CD8-positive, alpha-beta memory T cell (primary cell): ENCODE measurements at regions of chr14 and their contacts with region 1.

Region 1: DNA sequence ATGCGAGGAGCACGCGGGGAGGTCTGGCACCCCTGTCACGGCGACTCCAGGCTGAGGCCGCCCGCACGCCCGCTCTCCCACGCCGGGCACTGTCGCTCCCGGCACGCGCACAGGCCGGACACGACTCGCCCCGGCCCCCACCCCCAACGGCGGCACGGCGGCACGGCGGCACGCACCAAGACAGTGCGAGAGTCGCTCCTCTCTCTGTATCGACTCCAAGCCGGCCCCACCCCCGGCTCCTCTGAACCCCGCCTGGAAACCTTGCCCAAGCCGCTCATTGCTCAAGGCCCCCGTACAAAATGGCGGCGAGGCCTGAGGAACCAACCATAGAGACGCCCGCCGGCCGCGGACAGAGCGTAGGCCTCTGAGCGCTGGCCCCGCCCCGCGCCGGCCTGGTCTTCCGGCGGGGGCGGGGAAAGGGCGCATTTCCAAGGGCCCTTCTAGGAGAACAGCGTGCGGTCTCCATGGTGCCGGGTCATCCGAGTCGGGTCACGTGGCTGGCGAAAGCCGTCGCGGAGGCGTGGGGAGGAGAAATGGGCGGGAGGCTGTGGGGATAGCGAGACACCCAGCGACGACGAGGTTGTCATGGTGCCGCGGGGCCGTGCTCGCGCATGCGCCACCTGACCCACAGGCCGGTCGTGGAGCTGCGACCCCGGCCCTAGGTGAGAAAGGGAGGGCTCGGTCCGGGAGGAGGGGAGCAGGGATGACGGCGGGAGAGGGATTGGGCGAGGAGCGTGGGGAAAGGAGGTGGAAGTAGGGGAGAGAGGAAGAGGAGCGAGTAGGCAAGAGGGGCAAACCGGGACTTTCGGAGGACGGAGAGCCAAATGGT is at the start of gene CIPC:
- DNase-seq: peak; percentile 98 to 100 (median 99)
- H3K4me3 ChIP-seq: peak within 1 kb of the TSS; percentile 76
- H3K4me3 Mint-ChIP-seq: peak within 1 kb of the TSS; percentile 88 to 100 (median 92)
- H3K27ac ChIP-seq: peak within 1 kb of the TSS; percentile 97
- H3K27ac Mint-ChIP-seq: peak within 1 kb of the TSS; percentile 91 to 100 (median 97)
- H3K4me1 ChIP-seq: peaks cover 20% of the 10 kb centered on the region
- H3K4me1 Mint-ChIP-seq: peaks cover 26 to 61% (median 49%) of the 10 kb centered on the region in 3 donors
- H3K27me3 ChIP-seq: no peaks in the 10 kb centered on the region
- H3K27me3 Mint-ChIP-seq: no peaks in the 10 kb centered on the region
- total RNA-seq, gene CIPC: 10.5 to 12.7 TPM

Region 2: DNA sequence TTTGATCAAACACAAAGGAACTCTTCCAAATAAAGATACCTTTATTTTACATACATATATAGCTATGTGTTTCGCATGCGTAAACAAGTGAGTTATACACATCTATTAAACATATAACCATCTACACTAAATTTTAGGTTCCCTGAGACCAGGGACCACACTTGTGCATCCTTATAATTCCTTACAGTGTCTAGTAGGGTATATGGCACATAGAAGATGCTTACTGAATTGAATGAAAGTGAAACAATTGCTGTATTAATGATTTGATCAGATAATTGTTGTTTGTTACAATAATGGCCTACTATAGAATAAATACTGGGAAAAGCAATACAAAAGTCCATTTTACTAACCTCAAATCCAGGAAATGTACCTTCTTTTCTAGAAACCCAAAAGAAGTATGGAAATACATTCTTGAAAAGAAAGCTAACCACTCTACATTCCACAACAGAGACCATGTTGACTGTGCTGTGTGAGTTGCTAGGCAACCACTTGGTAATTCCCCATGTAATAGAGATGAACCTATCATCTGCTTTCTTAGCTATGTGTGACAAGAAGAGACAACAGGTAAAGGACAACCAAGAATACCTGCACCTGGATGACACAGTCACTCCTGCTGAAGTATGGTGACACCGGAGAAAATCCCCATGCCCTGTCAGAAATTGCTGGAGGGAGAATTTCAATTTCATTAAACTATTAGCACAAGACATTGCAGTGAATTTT is 11.7 kb before region 1 on chr14:
- CTCF ChIA-PET with region 1: interaction called, 12 read pairs
- POLR2A ChIA-PET with region 1: no interaction called
- DNase-seq: peak in 2 of 5 donors; percentile 14 to 26
- H3K4me3 ChIP-seq: no peak overlapping the region
- H3K4me3 Mint-ChIP-seq: no peak overlapping the region
- H3K27ac ChIP-seq: no peak overlapping the region
- H3K27ac Mint-ChIP-seq: peak overlapping the region in 4 of 8 donors; percentile 47 to 83 (median 66)
- H3K4me1 ChIP-seq: peaks cover 4% of the 10 kb centered on the region
- H3K4me1 Mint-ChIP-seq: peaks cover 0 to 7% (median 5%) of the 10 kb centered on the region in 3 donors
- H3K27me3 ChIP-seq: no peaks in the 10 kb centered on the region
- H3K27me3 Mint-ChIP-seq: peaks cover 7 to 13% of the 10 kb centered on the region in 2 donors

Region 3: DNA sequence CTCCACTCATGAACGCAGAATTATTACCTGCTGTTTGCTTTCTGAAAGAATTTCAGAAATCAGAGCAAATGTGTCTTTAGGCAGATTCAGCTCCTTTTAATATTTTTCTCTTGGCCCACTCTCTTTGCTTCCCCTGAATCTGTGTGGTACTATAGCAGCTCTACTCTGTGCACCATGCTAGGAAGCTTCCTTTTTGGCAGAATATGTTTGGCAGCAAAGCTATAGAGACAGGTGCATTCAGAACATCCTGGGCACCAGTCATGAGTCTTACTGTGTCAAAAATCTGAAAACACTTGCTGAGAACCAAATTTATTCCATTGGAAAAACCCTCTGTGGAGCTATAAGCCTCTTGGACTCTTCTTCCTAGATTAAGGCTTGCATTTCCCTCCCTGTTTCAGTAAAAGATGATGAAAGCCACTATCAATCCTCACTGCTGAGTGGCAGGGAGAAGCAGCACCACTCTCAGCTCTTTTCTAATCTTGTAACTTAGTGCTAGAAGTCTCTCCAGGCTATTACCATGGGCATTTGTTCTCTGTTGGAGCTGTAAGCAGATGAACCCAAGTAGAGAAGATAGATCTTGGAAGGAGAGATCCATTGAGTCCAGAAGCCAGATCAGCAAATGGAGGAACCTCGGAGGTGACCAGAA is 18.4 kb after region 1 on chr14:
- CTCF ChIA-PET with region 1: interaction called, 14 read pairs
- POLR2A ChIA-PET with region 1: interaction called, 13 read pairs
- DNase-seq: no peak
- H3K4me3 ChIP-seq: no peak overlapping the region
- H3K4me3 Mint-ChIP-seq: no peak overlapping the region
- H3K27ac ChIP-seq: no peak overlapping the region
- H3K27ac Mint-ChIP-seq: peak overlapping the region in 2 of 8 donors; percentile 15 to 17
- H3K4me1 ChIP-seq: peaks cover 10% of the 10 kb centered on the region
- H3K4me1 Mint-ChIP-seq: peaks cover 9 to 16% (median 15%) of the 10 kb centered on the region in 3 donors
- H3K27me3 ChIP-seq: no peaks in the 10 kb centered on the region
- H3K27me3 Mint-ChIP-seq: no peaks in the 10 kb centered on the region

Region 4: GRCh38 chr14:77124345-77125280 is 26.7 kb after region 1 on chr14:
- CTCF ChIA-PET with region 1: interaction called, 16 read pairs
- POLR2A ChIA-PET with region 1: interaction called, 13 read pairs
- DNase-seq: peak; percentile 55 to 76 (median 63)
- H3K4me3 ChIP-seq: peak overlapping the region; percentile 84
- H3K4me3 Mint-ChIP-seq: peak overlapping the region; percentile 76 to 87 (median 82)
- H3K27ac ChIP-seq: peak overlapping the region; percentile 64
- H3K27ac Mint-ChIP-seq: peak overlapping the region; percentile 14 to 97 (median 88)
- H3K4me1 ChIP-seq: peaks cover 42% of the 10 kb centered on the region
- H3K4me1 Mint-ChIP-seq: peaks cover 29 to 57% (median 53%) of the 10 kb centered on the region in 3 donors
- H3K27me3 ChIP-seq: peaks cover 9% of the 10 kb centered on the region
- H3K27me3 Mint-ChIP-seq: peaks cover 9 to 14% of the 10 kb centered on the region in 2 donors

Region 5: DNA sequence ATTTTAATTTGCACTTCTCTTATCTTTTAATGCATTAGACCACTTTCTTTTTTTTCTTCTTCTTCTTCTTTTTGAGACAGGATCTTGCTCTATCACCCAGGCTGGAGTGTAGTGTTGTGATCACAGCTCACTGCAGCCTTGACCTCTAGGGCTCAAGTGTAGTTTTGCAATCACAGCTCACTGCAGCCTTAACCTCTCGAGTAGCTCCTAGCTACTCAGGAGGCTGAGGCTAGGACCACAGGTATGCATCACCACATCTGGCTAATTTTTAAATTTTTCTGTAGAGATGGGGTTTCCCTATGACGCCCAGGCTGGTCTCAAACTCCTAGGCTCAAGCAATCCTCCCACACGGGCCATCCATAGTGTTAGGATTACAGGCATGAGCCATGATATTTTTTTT is 266.2 kb after region 1 on chr14:
- CTCF ChIA-PET with region 1: no interaction called
- POLR2A ChIA-PET with region 1: no interaction called
- DNase-seq: no peak
- H3K4me3 ChIP-seq: no peak overlapping the region
- H3K4me3 Mint-ChIP-seq: no peak overlapping the region
- H3K27ac ChIP-seq: no peak overlapping the region
- H3K27ac Mint-ChIP-seq: no peak overlapping the region
- H3K4me1 ChIP-seq: peaks cover 4% of the 10 kb centered on the region
- H3K4me1 Mint-ChIP-seq: peaks cover 7 to 19% (median 9%) of the 10 kb centered on the region in 3 donors
- H3K27me3 ChIP-seq: no peaks in the 10 kb centered on the region
- H3K27me3 Mint-ChIP-seq: no peaks in the 10 kb centered on the region